Right ventricle myocardium superior (tissue), 1 donor: ENCODE measurements at regions of chr18 and their contacts with region 1.

Region 1: GRCh38 chr18:13826211-13826610 is 2.3 kb downstream of the MC5R start:
- DNase-seq: no peak
- ATAC-seq: no peak

Region 2: DNA sequence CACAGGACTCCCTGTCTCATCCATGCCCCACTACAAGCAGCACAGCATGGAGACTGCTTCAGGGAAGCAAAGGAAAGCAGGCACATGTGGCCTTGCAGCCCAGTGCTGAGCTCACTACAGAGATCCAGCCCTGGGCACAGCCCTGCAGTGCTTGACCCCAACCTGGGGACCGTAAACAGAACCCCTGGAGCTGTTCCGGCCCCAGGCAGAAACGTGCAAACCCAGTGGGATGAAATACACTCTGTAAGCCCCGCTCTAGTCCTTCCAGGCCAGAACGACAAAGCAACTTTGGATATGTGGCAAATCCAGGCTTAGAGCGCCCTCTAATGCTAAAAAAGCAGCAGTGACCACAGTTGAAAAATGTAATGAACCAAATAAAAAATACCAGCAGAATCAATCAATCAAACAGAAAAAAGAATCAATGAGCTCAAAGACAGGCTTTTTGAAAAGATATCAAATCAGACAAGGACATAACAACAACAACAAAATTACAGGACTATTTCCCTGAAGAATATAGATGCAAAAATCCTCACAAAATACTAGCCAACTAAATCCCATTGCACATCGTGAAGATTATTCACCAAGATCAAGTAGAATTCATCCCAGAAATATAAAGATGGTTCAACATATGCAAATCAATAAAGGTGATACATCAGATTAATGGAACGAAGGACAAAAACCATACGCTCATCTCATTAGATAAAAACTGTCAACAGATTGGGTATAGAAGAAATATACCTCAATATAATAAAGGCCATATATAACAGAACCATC is 260.4 kb after region 1 on chr18:
- intact Hi-C with region 1: loop called (anchors 5 kb)
- DNase-seq: no peak
- ATAC-seq: peak; percentile 66